MCF 10A (cell line): ENCODE measurements at regions of chr1 and their contacts with region 1.

Region 1: DNA sequence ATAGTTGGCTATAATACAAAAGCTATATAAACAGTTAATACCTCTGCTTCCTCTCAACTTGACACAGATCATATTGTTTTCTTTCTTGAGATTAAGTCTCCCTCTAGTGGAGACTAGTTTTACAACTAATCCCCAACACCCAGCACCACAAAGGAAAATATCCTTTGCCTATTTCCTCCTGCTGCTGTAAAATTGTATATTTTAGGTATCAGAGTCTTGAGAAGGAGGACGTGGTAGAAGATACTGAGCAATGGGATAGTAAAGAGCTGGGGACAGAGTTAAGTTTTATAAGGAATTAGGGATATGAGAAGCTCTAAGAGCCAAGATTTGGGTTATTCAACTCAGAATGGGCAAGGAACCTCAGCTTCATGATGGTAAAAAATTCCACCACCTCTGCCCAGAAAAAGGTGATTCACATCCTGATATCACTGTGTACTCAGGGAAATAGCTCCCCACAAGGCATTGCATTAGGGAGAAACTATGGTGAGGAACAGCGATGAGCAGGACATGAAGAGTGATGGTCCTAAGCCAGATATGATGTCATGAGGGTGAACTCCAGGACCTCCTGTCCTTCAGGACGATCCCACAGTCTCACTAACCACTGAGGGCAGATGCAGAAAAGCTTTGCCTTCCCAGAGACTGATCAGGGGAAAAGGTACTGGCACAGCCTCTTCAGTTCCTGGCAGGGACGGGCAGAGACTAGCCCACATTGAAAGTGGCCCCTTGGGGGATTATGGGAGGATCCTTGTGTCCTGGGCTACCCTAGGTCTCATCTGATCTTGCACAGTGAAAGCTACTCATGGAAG is 14.7 kb upstream of the CFAP126 start:
- DNase-seq: peak; percentile 78
- H3K4me3 Mint-ChIP-seq: peak overlapping the region; percentile 11
- H3K27ac Mint-ChIP-seq: peak overlapping the region; percentile 37
- H3K4me1 Mint-ChIP-seq: peaks cover 22% of the 10 kb centered on the region
- H3K27me3 Mint-ChIP-seq: no peaks in the 10 kb centered on the region
- CTCF ChIP-seq: peak; percentile 68

Region 2: DNA sequence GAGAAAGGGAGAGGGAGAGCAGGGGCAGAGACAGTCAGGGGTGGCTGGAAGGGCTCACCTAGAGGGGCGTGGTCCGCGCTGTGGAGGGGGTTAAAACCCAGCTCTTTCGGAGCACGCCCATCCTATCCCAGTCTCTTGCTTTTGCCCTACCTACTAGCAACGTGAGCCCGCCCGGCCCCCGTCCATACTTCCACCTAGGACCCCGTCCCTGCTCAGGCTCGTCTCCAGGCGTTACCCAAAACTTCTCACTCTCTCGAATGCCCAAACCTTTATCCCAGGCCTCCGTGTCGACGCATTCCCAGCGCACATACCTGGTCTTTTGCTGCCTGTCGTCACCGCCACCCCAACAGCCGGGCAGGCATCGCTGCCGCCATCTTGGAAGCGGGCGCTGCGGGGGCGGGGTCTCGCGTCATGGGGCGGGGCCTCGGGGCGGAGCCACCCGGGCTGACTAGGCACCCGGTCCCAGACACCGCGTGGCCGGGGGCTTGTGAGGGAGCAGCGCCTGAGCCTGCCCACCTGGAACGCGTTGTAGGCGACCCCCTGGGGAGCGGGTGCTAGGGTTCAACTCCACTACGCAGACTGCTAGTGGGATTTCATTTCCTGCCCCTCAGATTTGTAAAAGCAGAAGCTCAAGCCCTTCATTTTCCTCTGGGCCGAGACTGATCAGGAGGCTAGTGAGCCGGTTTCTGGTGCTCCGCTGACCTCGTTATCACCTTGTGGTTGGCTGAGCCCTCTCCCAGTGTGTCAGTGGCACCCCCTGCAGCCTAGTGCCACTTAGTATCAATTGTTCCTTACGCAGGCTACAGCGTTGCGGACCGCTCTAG is 205.1 kb before region 1 on chr1 and contains the start of gene B4GALT3:
- CTCF ChIA-PET with region 1: interaction called, 57 read pairs
- POLR2A ChIA-PET with region 1: interaction called, 8 read pairs
- intact Hi-C with region 1: no loop called
- DNase-seq: peak; percentile 87
- H3K4me3 Mint-ChIP-seq: peak within 1 kb of the TSS; percentile 86
- H3K27ac Mint-ChIP-seq: peak within 1 kb of the TSS; percentile 92
- H3K4me1 Mint-ChIP-seq: peaks cover 37% of the 10 kb centered on the region
- H3K27me3 Mint-ChIP-seq: no peaks in the 10 kb centered on the region
- CTCF ChIP-seq: no peak
- total RNA-seq, gene B4GALT3: 50.0 and 51.7 TPM in 2 replicates

Region 3: GRCh38 chr1:161192476-161193465 is 189.6 kb before region 1 on chr1:
- CTCF ChIA-PET with region 1: interaction called, 96 read pairs
- POLR2A ChIA-PET with region 1: interaction called, 3 read pairs
- intact Hi-C with region 1: loop called (anchors 1 kb)
- DNase-seq: peak; percentile 88
- H3K4me3 Mint-ChIP-seq: no peak overlapping the region
- H3K27ac Mint-ChIP-seq: peak overlapping the region; percentile 71
- H3K4me1 Mint-ChIP-seq: peaks cover 20% of the 10 kb centered on the region
- H3K27me3 Mint-ChIP-seq: no peaks in the 10 kb centered on the region
- CTCF ChIP-seq: peak; percentile 92

Region 4: DNA sequence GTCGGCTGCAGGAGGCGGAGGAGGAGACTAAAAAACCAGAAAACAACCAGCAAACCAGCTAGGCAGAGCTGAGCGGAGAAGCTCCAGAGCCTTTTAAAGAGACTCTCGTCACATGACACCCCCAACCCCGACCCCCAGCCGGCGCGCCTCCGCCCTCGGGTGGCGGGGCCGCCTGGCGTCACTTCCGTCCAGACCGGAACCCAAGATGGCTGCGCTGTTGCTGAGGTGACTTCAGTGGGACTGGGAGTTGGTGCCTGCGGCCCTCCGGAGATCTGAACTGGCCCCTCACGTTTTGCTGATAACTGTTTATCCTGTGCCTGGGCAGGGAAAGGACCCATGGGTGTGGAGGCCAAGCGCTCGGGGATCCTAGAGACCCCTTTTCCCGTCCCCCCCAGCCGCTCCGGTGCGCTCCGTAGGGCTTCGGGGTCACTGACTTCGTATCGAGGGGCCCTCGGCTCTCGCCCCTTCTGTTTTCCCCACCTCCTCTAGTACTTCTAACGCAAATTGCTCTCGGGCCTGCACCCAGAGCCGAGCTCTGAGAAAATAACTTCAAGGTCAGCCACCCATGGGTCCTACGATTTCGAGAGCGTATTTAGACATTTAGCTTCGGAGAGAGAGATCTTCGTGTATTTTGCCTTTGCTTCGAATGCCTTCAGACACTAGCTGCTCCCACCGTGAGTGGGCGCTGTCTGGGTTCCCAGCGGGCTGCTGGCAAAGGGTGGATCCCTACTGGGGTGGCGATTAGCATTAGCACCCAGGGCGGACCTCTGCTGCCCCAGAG is 68.0 kb before region 1 on chr1 and contains the start of gene SDHC:
- CTCF ChIA-PET with region 1: interaction called, 20 read pairs
- POLR2A ChIA-PET with region 1: interaction called, 19 read pairs
- intact Hi-C with region 1: loop called (anchors 2 kb)
- DNase-seq: peak; percentile 87
- H3K4me3 Mint-ChIP-seq: peak within 1 kb of the TSS; percentile 97
- H3K27ac Mint-ChIP-seq: peak within 1 kb of the TSS; percentile 100
- H3K4me1 Mint-ChIP-seq: peaks cover 13% of the 10 kb centered on the region
- H3K27me3 Mint-ChIP-seq: no peaks in the 10 kb centered on the region
- CTCF ChIP-seq: peak; percentile 35
- total RNA-seq, gene SDHC: 204 and 224 TPM in 2 replicates

Region 5: GRCh38 chr1:161367684-161368400 is 14.6 kb before region 1 on chr1 and contains the start of gene CFAP126:
- CTCF ChIA-PET with region 1: interaction called, 60 read pairs
- POLR2A ChIA-PET with region 1: interaction called, 3 read pairs
- intact Hi-C with region 1: no loop called
- DNase-seq: peak; percentile 75
- H3K4me3 Mint-ChIP-seq: no peak within 1 kb of the TSS
- H3K27ac Mint-ChIP-seq: peak within 1 kb of the TSS; percentile 36
- H3K4me1 Mint-ChIP-seq: peaks cover 5% of the 10 kb centered on the region
- H3K27me3 Mint-ChIP-seq: no peaks in the 10 kb centered on the region
- CTCF ChIP-seq: no peak
- total RNA-seq, gene CFAP126: not detected in 2 replicates

Region 6: DNA sequence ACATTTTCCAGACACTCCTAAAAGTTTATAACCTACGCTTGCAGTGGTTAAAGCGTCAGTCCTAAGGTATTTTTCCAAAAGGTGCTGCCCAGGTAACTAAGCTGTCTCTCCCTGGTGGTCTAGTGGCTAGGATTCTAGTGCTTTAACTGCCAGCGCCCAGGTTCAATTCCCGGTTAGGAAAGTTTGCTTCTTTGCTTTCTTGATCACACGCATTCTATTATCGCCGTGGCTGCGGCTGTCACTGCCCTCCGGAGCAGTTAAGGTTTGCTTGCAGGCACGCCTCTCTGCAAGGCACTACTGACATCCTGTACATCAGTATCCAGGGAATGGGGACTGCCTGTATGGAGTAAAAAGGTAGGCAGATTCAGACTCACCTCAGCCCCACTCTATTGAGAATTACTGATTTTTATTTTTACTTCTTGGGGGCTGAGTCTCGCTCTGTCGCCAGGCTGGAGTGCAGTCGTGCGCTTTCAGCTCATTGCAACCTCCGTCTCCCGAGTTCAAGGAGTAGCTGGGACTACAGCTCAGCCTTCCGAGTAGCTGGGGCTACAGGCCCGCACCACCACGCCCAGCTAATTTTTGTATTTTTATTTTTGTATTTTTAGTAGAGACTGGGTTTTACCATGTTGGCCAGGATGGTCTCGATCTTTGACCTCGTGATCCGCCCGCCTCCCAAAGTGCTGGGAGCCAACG is 38.5 kb after region 1 on chr1:
- CTCF ChIA-PET with region 1: no interaction called
- POLR2A ChIA-PET with region 1: no interaction called
- intact Hi-C with region 1: no loop called
- DNase-seq: no peak
- H3K4me3 Mint-ChIP-seq: no peak overlapping the region
- H3K27ac Mint-ChIP-seq: no peak overlapping the region
- H3K4me1 Mint-ChIP-seq: no peaks in the 10 kb centered on the region
- H3K27me3 Mint-ChIP-seq: no peaks in the 10 kb centered on the region
- CTCF ChIP-seq: no peak

Region 7: GRCh38 chr1:161792740-161793139 is 410.3 kb after region 1 on chr1:
- CTCF ChIA-PET with region 1: no interaction called
- POLR2A ChIA-PET with region 1: no interaction called
- intact Hi-C with region 1: no loop called
- DNase-seq: peak; percentile 87
- H3K4me3 Mint-ChIP-seq: no peak overlapping the region
- H3K27ac Mint-ChIP-seq: no peak overlapping the region
- H3K4me1 Mint-ChIP-seq: peaks cover 18% of the 10 kb centered on the region
- H3K27me3 Mint-ChIP-seq: no peaks in the 10 kb centered on the region
- CTCF ChIP-seq: peak; percentile 71